Left colon (tissue), 2 donors: ENCODE measurements at regions of chr4 and their contacts with region 1.

Region 1: DNA sequence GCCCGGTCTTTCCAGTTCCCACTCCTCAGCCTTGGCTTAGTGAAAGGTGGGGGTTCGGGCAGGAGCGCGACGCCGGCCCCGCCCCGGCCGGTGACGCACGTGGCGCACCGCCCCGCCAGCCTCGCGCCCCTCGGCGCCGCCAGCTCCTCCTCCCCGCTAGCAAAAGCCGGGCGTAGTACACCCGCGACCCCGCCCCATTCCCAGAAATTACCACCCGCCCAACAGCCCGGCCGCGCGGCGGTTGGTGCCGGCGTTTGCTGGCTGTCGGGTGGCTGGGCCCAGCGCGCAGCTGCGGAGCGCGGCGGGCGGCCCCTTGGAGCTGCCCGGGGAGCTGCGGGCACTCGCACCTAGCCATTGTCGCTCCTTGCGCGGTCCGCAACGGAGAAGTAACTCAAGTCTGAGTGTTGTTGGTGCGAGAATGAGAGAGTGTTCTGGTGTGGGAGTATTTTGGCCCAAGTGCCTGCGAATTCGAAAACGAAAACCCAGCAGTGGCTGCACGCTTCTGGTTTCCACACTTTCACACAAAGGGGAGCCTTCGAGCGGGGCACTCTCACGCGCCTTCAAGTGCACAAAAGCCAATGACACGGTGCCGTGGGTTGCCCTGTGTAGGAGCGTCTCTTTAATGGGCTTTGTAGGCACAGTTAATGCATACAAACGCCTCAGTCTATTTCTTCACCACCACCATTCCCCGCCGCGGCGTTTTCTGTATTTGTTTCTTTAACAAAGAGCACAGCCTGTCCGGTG is 1.0 kb upstream of the ELF2 start:
- DNase-seq: peak; percentile 94 to 96
- ATAC-seq: peak; percentile 78

Region 2: GRCh38 chr4:138616775-138617174 is 561.3 kb before region 1 on chr4:
- intact Hi-C with region 1: no loop called
- DNase-seq: no peak
- ATAC-seq: no peak

Region 3: DNA sequence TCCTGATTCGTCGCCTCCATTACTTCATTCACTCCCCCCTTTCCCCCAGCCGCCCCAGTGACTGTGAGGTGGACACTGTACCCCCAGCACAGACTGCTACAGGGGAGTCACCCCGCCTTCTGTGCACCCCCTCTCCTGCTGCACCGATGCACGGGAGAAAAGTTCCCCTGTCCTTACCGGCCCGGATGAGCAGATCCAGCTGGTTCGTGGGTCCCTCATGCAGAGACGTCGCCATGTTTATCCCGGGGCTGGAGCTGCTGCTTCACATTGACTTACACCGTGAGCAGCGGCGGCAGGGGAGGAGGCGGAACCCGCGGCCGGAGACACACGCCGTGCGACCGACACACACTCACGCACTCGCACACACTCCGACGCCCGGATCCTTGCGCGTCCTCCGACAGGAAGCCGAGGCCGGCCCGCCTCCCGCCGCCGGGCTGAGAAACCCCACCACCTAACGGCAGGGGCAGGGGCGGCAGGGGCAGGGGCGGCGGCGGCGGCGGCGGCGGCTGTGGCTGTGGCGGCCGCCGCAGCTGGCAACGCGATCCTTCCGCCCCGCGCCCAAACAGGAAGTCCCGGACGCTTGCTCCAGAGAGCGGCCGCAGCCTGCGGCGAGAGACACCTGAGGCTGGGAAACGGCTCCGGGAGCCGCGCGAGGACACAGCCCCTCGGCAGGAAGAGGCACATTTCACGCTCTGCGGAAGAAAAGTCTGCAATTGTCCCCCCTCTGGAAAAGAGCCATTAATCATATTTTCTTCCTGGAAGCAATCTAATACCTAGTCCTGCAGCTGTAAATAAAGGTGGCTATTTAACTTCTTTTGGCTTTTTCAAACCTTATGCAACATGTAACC is 93.9 kb before region 1 on chr4:
- intact Hi-C with region 1: loop called in 1 of 2 experiments (anchors 10 kb)
- DNase-seq: peak; percentile 92 to 93
- ATAC-seq: peak; percentile 77